Endothelial cell of umbilical vein (primary cell): ENCODE measurements at regions of chr10 and their contacts with region 1.

Region 1: GRCh38 chr10:125084191-125084613 is 76.2 kb downstream of the CTBP2 start:
- DNase-seq: peak; percentile 93
- H3K4me3 ChIP-seq: no peak overlapping the region
- H3K27ac ChIP-seq: peak overlapping the region; percentile 91
- H3K4me1 ChIP-seq: peaks cover 51% of the 10 kb centered on the region
- H3K27me3 ChIP-seq: no peaks in the 10 kb centered on the region
- CTCF ChIP-seq: peak; percentile 28 to 52
- POLR2A ChIP-seq: no peak

Region 2: GRCh38 chr10:125137601-125138438 is 53.6 kb after region 1 on chr10:
- CTCF ChIA-PET with region 1: interaction called, 5 read pairs
- POLR2A ChIA-PET with region 1: no interaction called
- dilution Hi-C with region 1: no loop called
- intact Hi-C with region 1: loop called (anchors 1 kb)
- DNase-seq: peak; percentile 87
- H3K4me3 ChIP-seq: no peak overlapping the region
- H3K27ac ChIP-seq: no peak overlapping the region
- H3K4me1 ChIP-seq: peaks cover 20% of the 10 kb centered on the region
- H3K27me3 ChIP-seq: no peaks in the 10 kb centered on the region
- CTCF ChIP-seq: no peak
- POLR2A ChIP-seq: no peak